ENCODE measurements at regions of chr7 and their contacts with region 1.

Region 1: GRCh38 chr7:5792268-5792667 is 10.8 kb upstream of the RNF216 start:
- DNase-seq: no peak
- ATAC-seq: no peak
- H3K4me3 ChIP-seq: no peak overlapping the region
- H3K27ac ChIP-seq: no peak overlapping the region
- H3K4me1 ChIP-seq: no peaks in the 10 kb centered on the region
- H3K27me3 ChIP-seq: no peaks in the 10 kb centered on the region
- CTCF ChIP-seq: no peak

Region 2: DNA sequence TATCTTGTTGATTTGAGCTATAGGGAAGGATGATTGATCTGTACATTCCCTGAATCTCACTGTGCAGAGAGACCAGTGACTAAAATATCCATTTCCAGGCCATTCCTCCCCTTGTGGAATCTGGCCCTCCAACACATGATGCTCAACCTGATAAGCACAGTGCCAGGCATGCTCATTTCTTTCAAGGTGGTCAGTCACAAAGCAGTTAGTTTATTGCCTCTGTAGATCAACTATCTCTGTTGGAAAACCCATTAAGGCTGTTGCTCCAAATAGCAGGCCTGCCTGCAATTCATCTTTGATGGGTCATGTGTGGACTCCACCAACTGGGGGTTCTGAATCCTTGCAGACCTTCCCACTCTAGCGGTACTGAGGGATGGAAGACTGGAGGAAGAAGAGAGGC is 1278.8 kb before region 1 on chr7:
- CTCF ChIA-PET with region 1: no interaction called
- POLR2A ChIA-PET with region 1: interaction called, 12 read pairs
- in situ Hi-C with region 1: no loop called
- intact Hi-C with region 1: no loop called
- DNase-seq: no peak
- ATAC-seq: no peak
- H3K4me3 ChIP-seq: no peak overlapping the region
- H3K27ac ChIP-seq: no peak overlapping the region
- H3K4me1 ChIP-seq: no peaks in the 10 kb centered on the region
- H3K27me3 ChIP-seq: peaks cover 29% of the 10 kb centered on the region
- CTCF ChIP-seq: no peak; the same call in 1 of the 2 replicates